MCF 10A (cell line): ENCODE measurements at regions of chr1 and their contacts with region 1.

Region 1: GRCh38 chr1:103106426-103107341 is 1.6 kb downstream of the COL11A1 start:
- DNase-seq: peak; percentile 49
- H3K4me3 Mint-ChIP-seq: peak overlapping the region; percentile 67
- H3K27ac Mint-ChIP-seq: no peak overlapping the region
- H3K4me1 Mint-ChIP-seq: peaks cover 7% of the 10 kb centered on the region
- H3K27me3 Mint-ChIP-seq: peaks cover 11% of the 10 kb centered on the region
- CTCF ChIP-seq: peak; percentile 43

Region 2: GRCh38 chr1:103063921-103064320 is 42.8 kb before region 1 on chr1:
- CTCF ChIA-PET with region 1: no interaction called
- POLR2A ChIA-PET with region 1: no interaction called
- intact Hi-C with region 1: no loop called
- DNase-seq: peak; percentile 65
- H3K4me3 Mint-ChIP-seq: no peak overlapping the region
- H3K27ac Mint-ChIP-seq: no peak overlapping the region
- H3K4me1 Mint-ChIP-seq: peaks cover 5% of the 10 kb centered on the region
- H3K27me3 Mint-ChIP-seq: peaks cover 35% of the 10 kb centered on the region
- CTCF ChIP-seq: no peak

Region 3: GRCh38 chr1:103211073-103211472 is 104.4 kb after region 1 on chr1:
- CTCF ChIA-PET with region 1: no interaction called
- POLR2A ChIA-PET with region 1: no interaction called
- intact Hi-C with region 1: no loop called
- DNase-seq: no peak
- H3K4me3 Mint-ChIP-seq: no peak overlapping the region
- H3K27ac Mint-ChIP-seq: no peak overlapping the region
- H3K4me1 Mint-ChIP-seq: no peaks in the 10 kb centered on the region
- H3K27me3 Mint-ChIP-seq: peaks cover 47% of the 10 kb centered on the region
- CTCF ChIP-seq: no peak

Region 4: DNA sequence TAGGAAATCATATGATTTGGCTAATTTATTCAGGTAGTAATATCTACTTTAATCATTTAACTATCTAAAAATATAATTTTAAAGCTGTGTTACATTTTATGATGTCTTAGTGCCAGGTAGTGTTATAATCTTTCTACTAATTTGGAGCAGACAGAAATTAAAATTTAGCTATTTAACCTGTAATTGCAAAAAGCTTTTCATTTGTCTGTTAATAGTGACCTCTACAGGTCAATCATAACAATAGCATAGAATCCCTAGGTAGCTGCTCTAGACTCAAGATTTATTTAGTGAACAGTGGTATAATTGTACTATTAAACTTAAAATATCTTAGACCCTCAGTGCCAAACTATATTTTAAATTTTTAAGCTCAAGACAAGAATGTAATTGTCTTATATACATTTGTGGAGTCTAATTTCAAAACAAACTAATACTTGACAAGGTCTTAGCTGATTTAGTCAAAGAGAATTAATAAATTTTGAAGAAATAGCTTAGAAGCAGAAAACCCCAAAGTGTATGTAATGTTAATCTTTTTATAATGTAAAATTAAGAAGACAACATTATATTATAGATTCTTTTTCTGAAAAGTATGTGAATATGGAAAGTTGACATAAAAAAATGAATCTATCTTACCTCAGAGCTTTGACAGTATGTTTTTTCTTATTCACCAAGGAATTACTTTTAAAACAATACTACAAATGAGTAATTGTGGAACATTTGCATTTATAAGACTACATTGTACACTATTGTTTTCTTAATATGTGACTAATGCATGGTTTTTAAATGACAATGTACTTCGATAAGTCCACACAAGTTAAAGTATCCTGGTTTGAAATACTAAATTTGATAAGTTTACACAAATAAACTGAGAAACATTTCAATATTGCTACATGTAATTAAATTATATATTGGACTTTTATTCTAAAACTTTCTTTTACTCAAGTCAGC is 354.7 kb after region 1 on chr1:
- CTCF ChIA-PET with region 1: interaction called, 21 read pairs
- POLR2A ChIA-PET with region 1: interaction called, 4 read pairs
- intact Hi-C with region 1: loop called (anchors 1 kb)
- DNase-seq: peak; percentile 26
- H3K4me3 Mint-ChIP-seq: no peak overlapping the region
- H3K27ac Mint-ChIP-seq: no peak overlapping the region
- H3K4me1 Mint-ChIP-seq: no peaks in the 10 kb centered on the region
- H3K27me3 Mint-ChIP-seq: peaks cover 13% of the 10 kb centered on the region
- CTCF ChIP-seq: peak; percentile 59

Region 5: DNA sequence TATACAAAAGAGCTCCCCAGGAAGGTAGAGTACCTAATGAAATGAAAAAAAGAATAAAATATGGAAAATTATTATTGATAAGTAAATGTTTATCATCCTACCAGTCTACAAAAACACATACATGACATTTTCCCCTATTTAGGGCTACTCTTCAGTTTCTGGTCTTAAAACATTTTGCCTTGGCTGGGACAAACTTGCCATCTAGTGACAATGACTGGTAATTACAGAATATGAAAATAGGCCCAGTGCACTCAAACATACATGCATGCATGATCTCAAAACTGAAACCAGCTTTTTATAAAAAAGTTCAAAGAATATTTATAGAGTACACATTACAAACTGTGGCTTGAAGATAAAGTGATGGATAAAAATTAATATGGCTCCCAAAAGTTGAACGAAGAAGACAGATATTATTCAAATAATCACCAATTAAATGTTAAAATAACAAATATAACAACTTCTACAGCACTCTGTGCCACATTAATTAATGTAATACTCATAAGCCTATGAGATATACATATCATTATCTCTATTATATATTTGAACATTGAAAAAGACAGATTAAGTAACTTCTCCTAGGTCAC is 408.3 kb after region 1 on chr1:
- CTCF ChIA-PET with region 1: interaction called, 32 read pairs
- POLR2A ChIA-PET with region 1: no interaction called
- intact Hi-C with region 1: loop called (anchors 1 kb)
- DNase-seq: peak; percentile 68
- H3K4me3 Mint-ChIP-seq: no peak overlapping the region
- H3K27ac Mint-ChIP-seq: no peak overlapping the region
- H3K4me1 Mint-ChIP-seq: peaks cover 14% of the 10 kb centered on the region
- H3K27me3 Mint-ChIP-seq: no peaks in the 10 kb centered on the region
- CTCF ChIP-seq: peak; percentile 63